Naive thymus-derived CD4-positive, alpha-beta T cell (primary cell): ENCODE measurements at regions of chr17 and their contacts with region 1.

Region 1: DNA sequence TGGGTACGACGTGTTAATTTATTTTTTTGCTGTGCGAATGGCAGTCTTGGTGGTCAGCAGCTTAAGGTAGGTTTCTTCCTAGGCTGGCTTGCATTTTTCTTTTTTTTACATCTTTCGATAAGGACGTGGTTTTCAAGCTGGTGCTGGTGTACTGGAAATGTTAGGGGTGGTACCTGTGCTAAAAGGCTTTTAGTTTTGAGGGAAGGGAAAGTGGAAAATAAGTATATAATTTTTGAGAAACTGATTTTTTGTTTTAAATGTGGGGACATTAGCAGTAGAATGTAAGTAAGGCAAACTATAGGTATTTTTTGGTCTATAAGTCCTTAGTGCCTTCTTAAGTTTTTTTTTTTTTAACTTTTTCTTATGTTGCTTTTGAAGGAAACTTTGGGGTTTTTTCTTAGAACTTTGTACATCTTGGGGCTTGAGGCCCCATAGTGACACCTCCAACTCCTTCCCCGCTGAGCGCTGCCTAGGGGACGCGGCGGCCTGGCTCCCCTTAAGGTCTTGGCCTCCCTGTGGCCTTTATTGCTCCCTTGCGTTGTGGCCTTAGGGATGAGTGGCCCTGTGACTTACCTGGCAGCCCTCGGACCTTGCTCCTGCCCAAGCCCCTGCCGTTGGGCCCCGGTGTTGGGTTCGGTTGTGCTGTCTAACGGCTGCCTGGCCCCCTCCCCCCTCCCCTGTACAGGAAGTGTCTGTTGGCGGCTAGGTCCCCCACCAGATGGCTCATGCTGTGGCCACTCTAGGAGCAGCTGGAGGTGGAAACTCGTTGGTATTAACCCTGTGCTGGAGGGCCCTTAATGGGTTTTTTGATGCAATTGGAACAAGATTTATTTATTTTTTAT is 88.0 kb upstream of the RPRML start:
- DNase-seq: peak; percentile 42 to 87 (median 83)
- ATAC-seq: peak; percentile 100
- H3K4me3 ChIP-seq: peak overlapping the region; percentile 95
- H3K4me3 Mint-ChIP-seq: peak overlapping the region; percentile 81 to 97 (median 95)
- H3K27ac ChIP-seq: peak overlapping the region; percentile 89
- H3K27ac Mint-ChIP-seq: peak overlapping the region; percentile 70 to 97 (median 95)
- H3K4me1 ChIP-seq: peaks cover 0 to 10% of the 10 kb centered on the region in 2 donors
- H3K4me1 Mint-ChIP-seq: peaks cover 17 to 48% (median 39%) of the 10 kb centered on the region in 7 donors
- H3K27me3 ChIP-seq: no peaks in the 10 kb centered on the region
- H3K27me3 Mint-ChIP-seq: no peaks in the 10 kb centered on the region

Region 2: GRCh38 chr17:46889992-46890564 is 177.0 kb before region 1 on chr17:
- CTCF ChIA-PET with region 1: no interaction called
- POLR2A ChIA-PET with region 1: no interaction called
- intact Hi-C with region 1: no loop called
- DNase-seq: no peak
- ATAC-seq: no peak
- H3K4me3 ChIP-seq: no peak overlapping the region
- H3K4me3 Mint-ChIP-seq: no peak overlapping the region
- H3K27ac ChIP-seq: no peak overlapping the region
- H3K27ac Mint-ChIP-seq: no peak overlapping the region
- H3K4me1 ChIP-seq: no peaks in the 10 kb centered on the region
- H3K4me1 Mint-ChIP-seq: peaks cover 0 to 2% (median 0%) of the 10 kb centered on the region in 7 donors
- H3K27me3 ChIP-seq: no peaks in the 10 kb centered on the region
- H3K27me3 Mint-ChIP-seq: peaks cover 5 to 32% (median 11%) of the 10 kb centered on the region in 5 donors

Region 3: GRCh38 chr17:46922804-46923635 is 144.0 kb before region 1 on chr17 and contains the start of gene GOSR2:
- CTCF ChIA-PET with region 1: no interaction called
- POLR2A ChIA-PET with region 1: no interaction called
- intact Hi-C with region 1: loop called (anchors 1 kb)
- DNase-seq: peak; percentile 75 to 91 (median 87)
- ATAC-seq: peak; percentile 98
- H3K4me3 ChIP-seq: peak within 1 kb of the TSS; percentile 84
- H3K4me3 Mint-ChIP-seq: peak within 1 kb of the TSS; percentile 86 to 97 (median 92)
- H3K27ac ChIP-seq: peak within 1 kb of the TSS; percentile 78
- H3K27ac Mint-ChIP-seq: peak within 1 kb of the TSS; percentile 97 to 100 (median 100)
- H3K4me1 ChIP-seq: peaks cover 16 to 32% of the 10 kb centered on the region in 2 donors
- H3K4me1 Mint-ChIP-seq: peaks cover 35 to 59% (median 52%) of the 10 kb centered on the region in 7 donors
- H3K27me3 ChIP-seq: no peaks in the 10 kb centered on the region
- H3K27me3 Mint-ChIP-seq: peaks cover 0 to 4% (median 0%) of the 10 kb centered on the region in 5 donors
- total RNA-seq, gene GOSR2: 62.1 to 95.5 (median 71.0) TPM

Region 4: GRCh38 chr17:47009759-47010594 is 57.1 kb before region 1 on chr17:
- CTCF ChIA-PET with region 1: no interaction called
- POLR2A ChIA-PET with region 1: no interaction called
- intact Hi-C with region 1: loop called in 1 of 2 experiments (anchors 10 kb)
- DNase-seq: no peak
- ATAC-seq: no peak
- H3K4me3 ChIP-seq: no peak overlapping the region
- H3K4me3 Mint-ChIP-seq: no peak overlapping the region
- H3K27ac ChIP-seq: no peak overlapping the region
- H3K27ac Mint-ChIP-seq: no peak overlapping the region
- H3K4me1 ChIP-seq: no peaks in the 10 kb centered on the region
- H3K4me1 Mint-ChIP-seq: peaks cover 0 to 15% (median 8%) of the 10 kb centered on the region in 7 donors
- H3K27me3 ChIP-seq: no peaks in the 10 kb centered on the region
- H3K27me3 Mint-ChIP-seq: no peaks in the 10 kb centered on the region

Region 5: GRCh38 chr17:47099987-47100711 is 33.1 kb after region 1 on chr17:
- CTCF ChIA-PET with region 1: no interaction called
- POLR2A ChIA-PET with region 1: no interaction called
- intact Hi-C with region 1: loop called (anchors 1 kb)
- DNase-seq: peak; percentile 80 to 92 (median 88)
- ATAC-seq: peak; percentile 100
- H3K4me3 ChIP-seq: peak overlapping the region; percentile 87
- H3K4me3 Mint-ChIP-seq: peak overlapping the region; percentile 92 to 100 (median 97)
- H3K27ac ChIP-seq: peak overlapping the region; percentile 78
- H3K27ac Mint-ChIP-seq: peak overlapping the region; percentile 90 to 100 (median 96)
- H3K4me1 ChIP-seq: peaks cover 6 to 11% of the 10 kb centered on the region in 2 donors
- H3K4me1 Mint-ChIP-seq: peaks cover 7 to 38% (median 27%) of the 10 kb centered on the region in 7 donors
- H3K27me3 ChIP-seq: no peaks in the 10 kb centered on the region
- H3K27me3 Mint-ChIP-seq: peaks cover 0 to 3% (median 0%) of the 10 kb centered on the region in 5 donors

Region 6: DNA sequence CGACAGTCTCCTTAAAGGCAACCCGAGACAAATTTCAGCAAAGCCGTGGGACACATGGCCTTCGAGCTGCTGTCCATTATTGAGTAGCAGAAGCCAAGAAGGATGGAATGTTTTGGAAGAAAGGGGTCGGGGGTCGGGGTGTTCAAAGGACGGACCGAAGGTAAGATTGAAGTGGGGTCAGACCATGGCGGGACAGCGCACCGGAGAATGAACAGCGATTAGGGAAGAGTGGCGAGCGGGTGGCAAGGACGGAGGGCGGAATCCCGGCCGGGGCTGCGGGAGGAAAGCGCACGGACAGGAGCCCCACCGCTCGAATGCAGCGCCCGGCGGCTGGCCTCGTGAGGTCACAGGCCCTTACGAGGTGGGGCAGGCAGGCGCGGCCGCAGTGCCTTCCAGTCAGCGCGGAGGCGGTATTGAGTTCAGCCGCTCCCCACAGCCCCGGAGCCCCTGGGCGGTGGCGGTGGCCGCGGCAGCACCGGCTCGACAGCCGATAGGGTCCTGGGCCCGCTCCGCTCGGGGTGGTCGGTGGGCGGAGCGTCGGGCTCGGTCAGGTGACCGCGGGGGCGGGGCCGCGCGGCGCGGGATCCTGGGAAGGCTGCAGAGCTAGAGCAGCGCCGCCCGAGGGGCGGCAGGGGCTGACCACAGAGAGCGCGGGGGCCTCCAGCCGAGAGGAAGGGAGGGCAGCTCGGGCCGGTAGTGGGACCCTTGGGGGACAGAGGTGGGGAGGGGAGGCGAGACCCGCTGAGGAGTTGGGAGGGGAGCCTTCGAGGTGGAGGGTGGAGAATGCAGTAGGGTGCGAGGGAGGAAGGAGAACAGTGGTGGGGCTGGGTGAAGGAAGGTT is 256.5 kb after region 1 on chr17 and contains the start of gene EFCAB13:
- CTCF ChIA-PET with region 1: no interaction called
- POLR2A ChIA-PET with region 1: no interaction called
- intact Hi-C with region 1: loop called in 1 of 2 experiments (anchors 2 kb)
- DNase-seq: peak; percentile 55 to 84 (median 73)
- ATAC-seq: peak; percentile 91
- H3K4me3 ChIP-seq: peak within 1 kb of the TSS; percentile 93
- H3K4me3 Mint-ChIP-seq: peak within 1 kb of the TSS; percentile 92 to 100 (median 98)
- H3K27ac ChIP-seq: peak within 1 kb of the TSS; percentile 76
- H3K27ac Mint-ChIP-seq: peak within 1 kb of the TSS; percentile 91 to 99 (median 98)
- H3K4me1 ChIP-seq: peaks cover 0 to 3% of the 10 kb centered on the region in 2 donors
- H3K4me1 Mint-ChIP-seq: peaks cover 13 to 26% (median 22%) of the 10 kb centered on the region in 7 donors
- H3K27me3 ChIP-seq: no peaks in the 10 kb centered on the region
- H3K27me3 Mint-ChIP-seq: peaks cover 0 to 28% (median 0%) of the 10 kb centered on the region in 5 donors
- total RNA-seq, gene EFCAB13: 3.7 to 37.4 (median 19.9) TPM

Region 7: GRCh38 chr17:47821424-47822391 is 754.6 kb after region 1 on chr17 and contains the start of gene OSBPL7:
- CTCF ChIA-PET with region 1: no interaction called
- POLR2A ChIA-PET with region 1: no interaction called
- intact Hi-C with region 1: loop called in 1 of 2 experiments (anchors 5 kb)
- DNase-seq: peak; percentile 44 to 71 (median 66)
- ATAC-seq: peak; percentile 96
- H3K4me3 ChIP-seq: peak within 1 kb of the TSS; percentile 78
- H3K4me3 Mint-ChIP-seq: peak within 1 kb of the TSS; percentile 96 to 99 (median 97)
- H3K27ac ChIP-seq: peak within 1 kb of the TSS; percentile 80
- H3K27ac Mint-ChIP-seq: peak within 1 kb of the TSS; percentile 86 to 96 (median 91)
- H3K4me1 ChIP-seq: peaks cover 5 to 23% of the 10 kb centered on the region in 2 donors
- H3K4me1 Mint-ChIP-seq: peaks cover 7 to 33% (median 24%) of the 10 kb centered on the region in 7 donors
- H3K27me3 ChIP-seq: no peaks in the 10 kb centered on the region
- H3K27me3 Mint-ChIP-seq: no peaks in the 10 kb centered on the region
- total RNA-seq, gene OSBPL7: 36.6 to 46.1 (median 41.4) TPM